ENCODE measurements at regions of chr6 and their contacts with region 1.

Region 1: DNA sequence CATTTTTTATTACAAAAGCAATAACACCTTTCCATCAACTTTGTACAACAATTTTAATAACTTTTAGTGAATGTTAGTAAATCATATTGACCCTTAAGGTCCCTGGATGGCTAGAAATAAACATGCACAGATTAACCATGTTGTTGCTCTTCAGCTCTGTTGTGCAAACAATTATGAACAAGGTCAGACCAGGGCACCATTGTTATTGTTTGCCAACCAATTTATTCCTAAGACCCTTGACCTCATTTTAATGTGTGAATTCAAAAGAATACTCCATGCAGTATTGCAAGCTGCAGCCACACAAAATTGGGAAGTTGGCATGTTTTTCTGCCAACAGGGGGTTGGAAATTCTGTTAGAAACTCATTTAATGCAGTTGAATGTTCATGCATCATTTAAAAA is 426.6 kb upstream of the MAP3K7 start:
- DNase-seq: no peak
- ATAC-seq: no peak
- H3K4me3 ChIP-seq: no peak overlapping the region
- H3K27ac ChIP-seq: no peak overlapping the region
- H3K4me1 ChIP-seq: no peaks in the 10 kb centered on the region
- H3K27me3 ChIP-seq: no peaks in the 10 kb centered on the region
- CTCF ChIP-seq: no peak

Region 2: GRCh38 chr6:89970609-89971337 is 1042.7 kb before region 1 on chr6:
- intact Hi-C with region 1: no loop called
- DNase-seq: peak; percentile 23 to 54
- ATAC-seq: peak; percentile 43 to 84 (median 65)
- H3K4me3 ChIP-seq: no peak overlapping the region
- H3K27ac ChIP-seq: no peak overlapping the region
- H3K4me1 ChIP-seq: peaks cover 32% of the 10 kb centered on the region
- H3K27me3 ChIP-seq: no peaks in the 10 kb centered on the region
- CTCF ChIP-seq: peak; percentile 57

Region 3: GRCh38 chr6:90846824-90847223 is 166.7 kb before region 1 on chr6:
- intact Hi-C with region 1: no loop called
- DNase-seq: no peak
- ATAC-seq: no peak
- H3K4me3 ChIP-seq: no peak overlapping the region
- H3K27ac ChIP-seq: no peak overlapping the region
- H3K4me1 ChIP-seq: no peaks in the 10 kb centered on the region
- H3K27me3 ChIP-seq: no peaks in the 10 kb centered on the region
- CTCF ChIP-seq: no peak

Region 4: GRCh38 chr6:91288741-91289140 is 275.2 kb after region 1 on chr6:
- intact Hi-C with region 1: loop called in 1 of 2 experiments (anchors 10 kb)
- DNase-seq: no peak
- ATAC-seq: no peak
- H3K4me3 ChIP-seq: no peak overlapping the region
- H3K27ac ChIP-seq: no peak overlapping the region
- H3K4me1 ChIP-seq: no peaks in the 10 kb centered on the region
- H3K27me3 ChIP-seq: no peaks in the 10 kb centered on the region
- CTCF ChIP-seq: no peak